RWPE1 (cell line): ENCODE measurements at regions of chr20 and their contacts with region 1.

Region 1: DNA sequence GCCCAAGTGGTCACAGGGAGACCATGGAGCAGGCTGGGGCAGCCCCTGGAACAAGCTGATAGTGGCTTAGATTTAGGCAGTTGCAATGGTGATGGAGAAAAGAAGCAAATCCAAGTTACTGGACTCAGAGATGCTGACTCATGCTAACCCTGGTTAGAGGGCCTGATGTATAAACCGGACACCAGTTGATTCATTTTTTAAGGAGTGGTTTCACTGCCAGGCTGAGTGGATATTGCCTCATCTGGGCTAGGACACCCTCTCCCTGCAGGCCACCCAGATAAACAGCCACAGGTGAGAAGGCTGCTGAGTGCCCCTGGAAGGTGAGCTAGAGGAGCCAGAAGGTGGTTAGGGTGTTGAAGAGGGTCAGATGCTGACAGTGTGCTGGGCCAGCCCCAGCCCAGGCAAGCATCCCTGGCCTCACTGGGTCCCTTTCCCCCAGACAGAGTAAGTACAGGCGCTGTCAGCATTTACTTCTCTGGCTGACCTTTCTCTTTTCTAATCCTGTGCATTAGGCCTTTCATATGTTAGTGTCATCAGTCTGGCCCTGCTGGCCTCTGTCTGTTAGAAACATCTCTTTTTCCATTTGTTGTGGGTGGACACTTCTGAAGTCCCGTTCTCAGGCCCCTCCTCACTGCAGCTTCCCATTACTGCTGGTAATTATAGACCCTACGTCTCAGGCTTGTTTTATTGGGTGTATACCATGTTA is 13.4 kb downstream of the EPB41L1 start:
- DNase-seq: peak; percentile 80
- H3K27ac ChIP-seq: peak overlapping the region; percentile 65
- CTCF ChIP-seq: no peak

Region 2: DNA sequence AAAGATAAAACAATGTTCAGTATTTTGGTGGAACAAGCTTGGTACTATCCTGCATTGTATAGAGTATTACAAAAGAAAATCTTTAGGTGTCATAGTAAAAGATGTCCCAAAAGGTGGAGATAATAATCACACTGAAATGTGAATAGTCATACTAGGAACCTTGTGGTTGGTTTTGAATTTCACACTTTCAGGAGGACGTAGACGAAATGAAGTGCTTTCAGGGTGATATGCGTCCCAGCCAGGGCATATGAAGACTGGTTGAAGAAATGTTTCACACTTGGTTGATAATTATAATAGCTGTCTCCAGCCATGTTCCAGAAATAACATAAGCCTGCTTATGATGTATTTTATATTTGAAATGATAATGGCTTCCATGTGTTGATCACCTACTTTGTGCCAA is 274.0 kb before region 1 on chr20:
- CTCF ChIA-PET with region 1: no interaction called
- POLR2A ChIA-PET with region 1: no interaction called
- DNase-seq: no peak
- H3K27ac ChIP-seq: no peak overlapping the region
- CTCF ChIP-seq: no peak

Region 3: DNA sequence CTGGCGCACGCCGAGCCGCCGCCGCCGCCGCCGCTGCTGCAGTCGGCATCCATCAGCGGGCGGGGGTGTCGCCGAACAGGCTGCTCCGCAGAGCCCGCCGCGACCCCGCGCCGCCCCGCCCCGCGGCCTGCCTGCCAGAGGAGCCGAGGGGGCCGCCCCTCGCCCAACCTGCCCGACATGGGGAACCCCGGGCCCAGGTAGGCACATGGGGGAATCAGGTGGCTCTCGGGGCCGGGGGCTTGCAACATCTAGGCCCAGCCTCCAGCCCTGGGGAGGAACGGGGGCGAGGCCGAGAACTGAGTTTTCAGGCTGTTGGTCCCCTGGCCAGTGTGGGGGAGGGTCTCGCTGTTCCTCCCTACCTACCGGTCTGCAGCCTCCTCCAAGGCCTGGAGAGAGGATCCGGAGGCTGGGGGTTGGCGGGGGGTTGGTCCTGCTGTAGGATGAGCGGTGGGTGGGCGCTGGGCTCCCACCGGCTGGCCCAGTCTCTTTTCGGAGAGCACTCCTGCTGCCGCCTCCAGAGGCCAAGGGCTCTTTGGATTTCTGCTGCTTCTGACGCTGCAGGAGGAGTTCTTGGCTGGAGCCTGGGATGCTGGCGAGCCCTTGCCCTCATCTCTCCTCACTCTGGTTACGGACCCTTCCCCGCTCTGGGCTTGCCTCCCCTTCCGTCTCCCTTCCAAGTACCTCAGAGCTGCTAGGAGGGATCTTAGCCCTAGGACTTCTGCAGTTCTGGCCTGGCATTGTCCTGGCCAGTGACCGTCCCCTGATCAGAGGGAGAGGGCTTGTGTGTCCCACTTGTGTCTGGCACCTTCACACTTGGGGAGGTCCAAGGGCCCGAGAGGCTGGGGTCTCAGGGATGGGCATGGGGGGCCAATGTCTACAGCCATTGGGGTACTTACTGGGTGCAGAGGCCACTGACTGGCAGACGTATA is 13.0 kb before region 1 on chr20 and contains the start of gene EPB41L1:
- CTCF ChIA-PET with region 1: interaction called, 19 read pairs
- POLR2A ChIA-PET with region 1: no interaction called
- DNase-seq: no peak
- H3K27ac ChIP-seq: peak within 1 kb of the TSS; percentile 44
- CTCF ChIP-seq: no peak

Region 4: DNA sequence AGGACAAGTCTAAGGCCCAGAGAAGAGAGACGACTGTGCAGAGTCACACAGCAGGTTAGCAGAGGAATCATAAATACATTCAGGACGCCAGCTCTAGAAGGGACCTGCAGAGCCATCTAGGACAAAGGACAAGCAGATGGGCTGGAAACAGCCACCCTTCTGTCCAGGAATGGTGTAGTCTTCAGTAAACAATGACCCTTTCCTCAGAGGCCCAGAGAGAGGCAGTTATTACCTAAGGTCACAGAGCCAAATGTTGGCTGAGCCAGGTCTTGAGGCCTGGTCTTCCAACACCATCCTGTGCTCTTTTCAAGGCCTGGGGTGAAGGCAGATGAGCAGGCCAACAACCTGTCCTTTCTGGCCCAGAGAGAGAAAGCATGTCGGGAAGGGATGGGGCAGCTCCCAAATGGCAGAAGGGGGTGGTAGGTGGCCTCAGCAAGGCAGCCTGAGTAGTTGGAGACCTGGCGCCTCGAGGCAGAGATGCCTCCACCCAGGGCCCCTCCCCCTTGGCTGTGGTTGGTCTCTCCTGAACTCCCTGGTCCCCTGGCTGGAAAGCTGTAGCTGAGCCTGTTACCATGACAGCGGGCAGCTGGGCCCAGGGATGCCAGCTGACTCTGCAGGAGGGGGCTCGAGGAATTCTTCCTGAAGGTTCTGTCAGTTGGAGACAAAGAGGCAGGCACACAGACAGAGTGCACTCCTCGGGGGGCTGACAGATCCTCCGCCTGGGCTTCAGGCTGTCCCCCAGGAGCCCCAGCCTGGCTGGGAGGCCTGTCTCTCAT is 11.4 kb after region 1 on chr20:
- CTCF ChIA-PET with region 1: no interaction called
- POLR2A ChIA-PET with region 1: interaction called, 11 read pairs
- DNase-seq: no peak
- H3K27ac ChIP-seq: no peak overlapping the region
- CTCF ChIP-seq: no peak